ENCODE measurements at regions of chr1 and their contacts with region 1.

Region 1: DNA sequence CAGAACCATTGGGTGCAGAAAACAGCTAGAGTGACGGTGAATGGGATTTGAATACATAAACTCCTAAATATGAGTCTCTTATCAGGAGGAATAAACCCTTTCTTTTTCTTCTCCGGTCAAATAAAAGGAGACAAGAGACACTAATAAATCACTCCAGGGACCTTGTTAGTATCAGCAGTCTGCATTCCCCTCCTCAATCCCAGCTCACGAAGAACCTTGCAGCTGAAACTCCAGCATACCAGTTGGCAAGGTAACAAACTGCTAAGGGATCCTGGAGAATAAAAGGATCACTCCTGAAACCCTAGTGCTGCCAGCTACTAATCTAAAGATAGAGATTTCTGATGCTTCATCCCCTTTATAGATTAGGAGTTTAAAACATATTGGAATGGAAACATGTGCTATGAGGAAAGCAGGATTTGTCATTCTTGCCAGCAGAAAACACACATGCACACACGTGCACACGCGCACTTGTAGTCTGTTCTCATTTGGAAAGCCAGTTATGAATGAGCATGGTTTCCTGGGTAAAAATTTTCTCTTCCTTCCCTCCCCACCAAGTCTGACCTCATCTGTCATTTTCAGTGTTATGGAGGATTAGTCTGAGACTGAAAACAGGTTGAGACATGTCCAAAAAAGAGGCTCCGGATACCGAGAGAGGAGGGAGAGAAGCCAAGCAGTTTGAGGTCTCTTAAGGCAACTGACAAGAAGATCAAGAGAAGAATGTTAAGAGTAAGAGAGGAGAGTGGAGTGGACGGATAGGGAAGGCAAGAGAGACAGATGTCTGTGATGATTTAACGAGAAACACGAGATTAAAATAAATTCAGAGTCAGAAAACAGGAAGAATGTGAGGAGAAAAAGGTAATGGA is 10.9 kb downstream of the IER5 start:
- DNase-seq: peak; percentile 90
- H3K27ac ChIP-seq: peak overlapping the region; percentile 74
- CTCF ChIP-seq: no peak

Region 2: GRCh38 chr1:180468311-180468710 is 631.1 kb before region 1 on chr1:
- CTCF ChIA-PET with region 1: no interaction called
- POLR2A ChIA-PET with region 1: interaction called, 10 read pairs
- DNase-seq: no peak
- H3K27ac ChIP-seq: no peak overlapping the region
- CTCF ChIP-seq: no peak

Region 3: GRCh38 chr1:180734366-180734765 is 365.0 kb before region 1 on chr1:
- CTCF ChIA-PET with region 1: no interaction called
- POLR2A ChIA-PET with region 1: no interaction called
- DNase-seq: no peak
- H3K27ac ChIP-seq: no peak overlapping the region
- CTCF ChIP-seq: no peak

Region 4: DNA sequence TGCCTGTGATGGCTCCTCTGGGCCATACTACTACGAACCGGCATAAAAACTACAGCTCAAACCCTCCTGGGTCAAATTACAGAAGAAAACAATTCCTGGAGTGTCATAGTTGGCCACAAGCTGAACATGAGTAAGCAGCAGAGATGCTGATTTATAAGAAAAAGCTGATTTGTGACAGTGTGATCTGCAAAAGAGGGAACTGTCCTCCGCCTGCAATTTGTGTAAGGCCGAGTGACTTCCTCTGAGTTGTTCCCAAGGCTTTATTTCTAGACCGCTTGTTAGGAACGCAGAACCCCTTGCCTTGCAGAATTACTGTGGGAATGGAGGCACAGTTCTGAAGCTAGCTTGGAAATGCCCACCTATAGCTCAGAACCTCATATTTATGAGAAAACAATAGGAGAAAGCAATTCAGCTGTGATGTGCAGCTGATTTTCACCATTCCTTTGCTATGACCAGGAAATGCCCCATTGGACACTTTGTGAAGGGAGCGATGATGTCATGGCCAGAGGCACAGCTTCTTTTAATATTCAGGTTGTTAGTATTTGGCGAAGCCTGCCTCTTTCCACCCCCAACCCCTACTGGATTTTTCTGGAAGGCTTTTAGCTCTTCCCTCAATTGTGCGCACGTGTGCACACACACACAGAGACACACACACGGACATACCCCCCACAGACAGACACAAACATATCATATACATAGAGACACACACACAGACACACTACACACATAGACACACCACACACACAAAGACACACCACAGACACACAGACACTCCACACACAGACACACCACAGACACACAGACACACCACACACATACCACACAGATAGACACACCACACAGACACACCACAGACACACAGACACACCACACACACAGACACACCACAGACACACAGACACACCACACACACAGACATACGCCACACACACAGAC is 36.7 kb after region 1 on chr1:
- CTCF ChIA-PET with region 1: interaction called, 63 read pairs
- POLR2A ChIA-PET with region 1: interaction called, 6 read pairs
- DNase-seq: peak; percentile 90
- H3K27ac ChIP-seq: peak overlapping the region; percentile 86
- CTCF ChIP-seq: no peak

Region 5: GRCh38 chr1:182839209-182840065 is 1740.1 kb after region 1 on chr1 and contains the start of gene DHX9:
- CTCF ChIA-PET with region 1: no interaction called
- POLR2A ChIA-PET with region 1: interaction called, 19 read pairs
- DNase-seq: peak; percentile 97
- H3K27ac ChIP-seq: peak within 1 kb of the TSS; percentile 93
- CTCF ChIP-seq: 0 out of 2 replicates have a peak, but pooled peaks have one; percentile 6

Measured in RWPE1 (cell line).